Mammary epithelial cell (primary cell): ENCODE measurements at regions of chr4 and their contacts with region 1.

Region 1: GRCh38 chr4:155787113-155787710 is 28.4 kb downstream of the GUCY1B1 start:
- DNase-seq: peak; percentile 51
- H3K4me3 ChIP-seq: no peak overlapping the region
- H3K27ac ChIP-seq: no peak overlapping the region
- H3K4me1 ChIP-seq: no peaks in the 10 kb centered on the region
- H3K27me3 ChIP-seq: no peaks in the 10 kb centered on the region
- CTCF ChIP-seq: peak; percentile 86 to 90

Region 2: GRCh38 chr4:155403886-155404285 is 383.3 kb before region 1 on chr4:
- CTCF ChIA-PET with region 1: no interaction called
- dilution Hi-C with region 1: no loop called
- in situ Hi-C with region 1: loop called in 1 of 2 experiments (anchors 25 kb)
- intact Hi-C with region 1: loop called (anchors 1 kb)
- DNase-seq: peak; percentile 23
- H3K4me3 ChIP-seq: no peak overlapping the region
- H3K27ac ChIP-seq: no peak overlapping the region
- H3K4me1 ChIP-seq: no peaks in the 10 kb centered on the region
- H3K27me3 ChIP-seq: peaks cover 2% of the 10 kb centered on the region
- CTCF ChIP-seq: peak in 1 of 2 donors; percentile 50

Region 3: GRCh38 chr4:155442267-155443105 is 344.7 kb before region 1 on chr4:
- CTCF ChIA-PET with region 1: no interaction called
- dilution Hi-C with region 1: no loop called
- in situ Hi-C with region 1: loop called in 1 of 2 experiments (anchors 25 kb)
- intact Hi-C with region 1: loop called (anchors 1 kb)
- DNase-seq: peak; percentile 59
- H3K4me3 ChIP-seq: peak overlapping the region in 1 of 3 experiments; percentile 10
- H3K27ac ChIP-seq: no peak overlapping the region
- H3K4me1 ChIP-seq: no peaks in the 10 kb centered on the region
- H3K27me3 ChIP-seq: no peaks in the 10 kb centered on the region
- CTCF ChIP-seq: peak; percentile 97 to 99

Region 4: GRCh38 chr4:155506745-155507144 is 280.5 kb before region 1 on chr4:
- CTCF ChIA-PET with region 1: no interaction called
- dilution Hi-C with region 1: no loop called
- in situ Hi-C with region 1: no loop called
- intact Hi-C with region 1: no loop called
- DNase-seq: no peak
- H3K4me3 ChIP-seq: no peak overlapping the region
- H3K27ac ChIP-seq: no peak overlapping the region
- H3K4me1 ChIP-seq: no peaks in the 10 kb centered on the region
- H3K27me3 ChIP-seq: no peaks in the 10 kb centered on the region
- CTCF ChIP-seq: no peak

Region 5: GRCh38 chr4:155529272-155529671 is 257.9 kb before region 1 on chr4:
- CTCF ChIA-PET with region 1: no interaction called
- dilution Hi-C with region 1: no loop called
- in situ Hi-C with region 1: no loop called
- intact Hi-C with region 1: loop called (anchors 1 kb)
- DNase-seq: no peak
- H3K4me3 ChIP-seq: no peak overlapping the region
- H3K27ac ChIP-seq: no peak overlapping the region
- H3K4me1 ChIP-seq: no peaks in the 10 kb centered on the region
- H3K27me3 ChIP-seq: no peaks in the 10 kb centered on the region
- CTCF ChIP-seq: peak; percentile 34 to 69

Region 6: DNA sequence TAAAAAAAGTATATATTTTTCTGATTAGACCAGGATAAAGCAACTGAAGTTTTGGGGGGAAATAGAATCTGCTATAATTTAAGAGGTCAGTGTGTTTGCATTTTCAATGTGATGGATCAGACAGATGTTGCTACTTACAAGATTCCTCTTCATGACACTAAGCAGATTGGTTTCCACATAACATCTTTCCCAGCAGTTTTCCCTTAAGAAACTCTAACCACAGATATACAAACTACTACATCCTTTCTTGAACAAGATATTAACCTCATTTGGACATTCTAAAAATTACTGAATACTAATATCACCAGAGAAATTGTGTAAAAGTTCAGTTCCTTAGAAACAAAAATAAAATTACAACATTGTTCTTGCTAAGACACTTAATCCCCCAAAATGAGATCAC is 227.3 kb before region 1 on chr4:
- CTCF ChIA-PET with region 1: no interaction called
- dilution Hi-C with region 1: no loop called
- in situ Hi-C with region 1: no loop called
- intact Hi-C with region 1: no loop called
- DNase-seq: no peak
- H3K4me3 ChIP-seq: no peak overlapping the region
- H3K27ac ChIP-seq: no peak overlapping the region
- H3K4me1 ChIP-seq: no peaks in the 10 kb centered on the region
- H3K27me3 ChIP-seq: no peaks in the 10 kb centered on the region
- CTCF ChIP-seq: no peak

Region 7: DNA sequence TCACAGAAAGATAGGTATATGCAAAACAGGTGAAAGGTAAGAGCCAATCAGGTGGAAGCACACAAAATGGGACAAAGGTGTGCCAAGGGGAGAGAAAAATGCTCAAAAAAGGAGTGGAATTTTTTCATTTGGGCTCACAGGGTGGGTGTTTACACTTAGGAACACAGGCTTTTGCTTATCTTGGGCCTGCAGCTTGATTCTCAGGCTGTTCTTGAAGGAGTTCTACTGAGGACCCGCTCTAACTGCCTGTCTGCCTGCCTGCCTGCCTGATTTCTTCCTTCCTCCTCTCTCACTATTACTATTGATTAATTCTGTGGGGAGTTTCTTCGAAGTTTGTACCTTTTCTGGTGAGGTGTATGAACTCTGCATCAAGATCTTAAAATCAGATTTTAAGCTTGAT is 286.8 kb after region 1 on chr4:
- CTCF ChIA-PET with region 1: no interaction called
- dilution Hi-C with region 1: no loop called
- in situ Hi-C with region 1: no loop called
- intact Hi-C with region 1: no loop called
- DNase-seq: no peak
- H3K4me3 ChIP-seq: no peak overlapping the region
- H3K27ac ChIP-seq: no peak overlapping the region
- H3K4me1 ChIP-seq: no peaks in the 10 kb centered on the region
- H3K27me3 ChIP-seq: no peaks in the 10 kb centered on the region
- CTCF ChIP-seq: no peak

Region 8: DNA sequence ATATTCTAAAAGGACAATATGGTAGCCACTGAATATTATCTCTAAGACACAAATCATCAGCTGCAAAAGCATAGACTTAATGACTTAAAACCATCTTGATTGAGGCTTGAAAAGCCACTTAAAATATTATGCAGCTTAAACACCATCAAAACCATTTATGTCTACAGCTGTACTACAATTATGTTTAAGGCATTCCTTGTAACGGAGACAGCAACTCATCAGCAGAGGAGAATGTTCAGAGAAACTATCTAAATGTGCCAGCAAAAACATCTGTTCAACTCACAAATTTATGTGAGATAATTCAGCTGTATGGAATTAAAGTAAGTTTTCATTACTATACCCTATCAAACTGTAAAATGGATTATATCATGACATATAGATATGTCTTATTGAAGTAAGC is 314.4 kb after region 1 on chr4:
- CTCF ChIA-PET with region 1: no interaction called
- dilution Hi-C with region 1: no loop called
- in situ Hi-C with region 1: no loop called
- intact Hi-C with region 1: no loop called
- DNase-seq: no peak
- H3K4me3 ChIP-seq: no peak overlapping the region
- H3K27ac ChIP-seq: no peak overlapping the region
- H3K4me1 ChIP-seq: no peaks in the 10 kb centered on the region
- H3K27me3 ChIP-seq: no peaks in the 10 kb centered on the region
- CTCF ChIP-seq: no peak